ENCODE measurements at regions of chr5 and their contacts with region 1.

Region 1: GRCh38 chr5:149765932-149766331 is 35.8 kb downstream of the PPARGC1B start:
- DNase-seq: peak; percentile 17
- ATAC-seq: no peak
- H3K4me3 Mint-ChIP-seq: no peak overlapping the region
- H3K27ac Mint-ChIP-seq: no peak overlapping the region
- H3K4me1 Mint-ChIP-seq: no peaks in the 10 kb centered on the region
- H3K27me3 Mint-ChIP-seq: no peaks in the 10 kb centered on the region

Region 2: GRCh38 chr5:149656576-149657182 is 109.3 kb before region 1 on chr5:
- CTCF ChIA-PET with region 1: interaction called, 6 read pairs
- POLR2A ChIA-PET with region 1: no interaction called
- intact Hi-C with region 1: loop called in 1 of 2 experiments (anchors 10 kb)
- DNase-seq: peak; percentile 42
- ATAC-seq: no peak
- H3K4me3 Mint-ChIP-seq: no peak overlapping the region
- H3K27ac Mint-ChIP-seq: no peak overlapping the region
- H3K4me1 Mint-ChIP-seq: no peaks in the 10 kb centered on the region
- H3K27me3 Mint-ChIP-seq: peaks cover 7% of the 10 kb centered on the region

Measured in activated CD4-positive, alpha-beta T cell treated with anti-CD3 and anti-CD28 coated beads for 36 hours (primary cell).